ENCODE measurements at regions of chr18 and their contacts with region 1.

Region 1: DNA sequence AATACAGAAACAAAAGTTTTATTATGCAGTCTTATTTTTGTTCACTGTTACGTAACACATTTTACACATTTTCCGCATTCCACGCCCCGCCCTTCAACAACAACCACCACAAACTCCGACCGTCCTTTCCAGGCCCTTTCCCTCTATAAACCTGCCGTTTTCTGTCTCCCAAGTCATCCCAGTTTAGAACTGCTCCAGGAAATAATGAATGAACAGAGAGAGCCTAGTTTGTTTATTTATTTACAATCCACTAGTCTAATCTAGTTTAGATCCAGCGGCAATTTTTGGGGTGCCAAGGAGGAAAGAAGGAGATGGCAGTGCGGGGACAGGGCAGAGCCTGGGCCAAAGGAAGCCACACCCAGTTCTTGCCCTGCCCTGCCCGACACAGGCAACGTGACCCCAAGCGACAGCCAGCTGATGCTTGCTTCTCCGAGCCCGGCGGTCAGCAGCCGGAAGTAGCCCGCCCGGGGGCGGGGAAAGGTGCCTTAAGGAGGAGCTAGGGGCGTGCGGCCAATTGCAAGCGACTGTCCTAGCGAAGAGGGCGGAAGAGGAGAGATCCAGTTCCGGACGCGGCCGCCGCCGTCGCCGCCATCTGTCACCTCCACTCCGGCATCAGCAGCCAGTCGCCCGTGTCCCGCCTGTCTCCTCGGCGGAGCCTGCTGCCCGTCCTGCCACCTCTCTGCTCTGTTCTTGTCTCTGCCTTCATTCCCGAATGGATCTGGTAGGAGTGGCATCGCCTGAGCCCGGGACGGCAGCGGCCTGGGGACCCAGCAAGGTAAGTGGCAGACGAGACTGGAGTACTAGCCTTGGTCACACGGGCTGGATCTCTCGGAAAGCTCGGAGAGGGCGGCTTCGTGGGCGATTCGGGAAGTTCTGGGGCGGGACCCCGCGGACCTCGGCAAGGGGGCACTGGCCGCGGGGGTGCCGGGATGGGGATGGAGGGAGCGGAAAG is at the start of gene RIOK3:
- DNase-seq: peak; percentile 96
- ATAC-seq: peak; percentile 98
- H3K4me3 Mint-ChIP-seq: peak within 1 kb of the TSS; percentile 99
- H3K27ac Mint-ChIP-seq: peak within 1 kb of the TSS; percentile 81
- H3K4me1 Mint-ChIP-seq: peaks cover 42% of the 10 kb centered on the region
- H3K27me3 Mint-ChIP-seq: no peaks in the 10 kb centered on the region
- total RNA-seq, gene RIOK3: 71.1 to 71.2 TPM

Region 2: GRCh38 chr18:21612125-21612991 is 1840.6 kb before region 1 on chr18 and contains the start of gene SNRPD1:
- CTCF ChIA-PET with region 1: no interaction called
- POLR2A ChIA-PET with region 1: no interaction called
- intact Hi-C with region 1: loop called in 1 of 2 experiments (anchors 10 kb)
- DNase-seq: peak; percentile 93
- ATAC-seq: peak; percentile 98
- H3K4me3 Mint-ChIP-seq: peak within 1 kb of the TSS; percentile 92
- H3K27ac Mint-ChIP-seq: peak within 1 kb of the TSS; percentile 99
- H3K4me1 Mint-ChIP-seq: peaks cover 34% of the 10 kb centered on the region
- H3K27me3 Mint-ChIP-seq: no peaks in the 10 kb centered on the region
- total RNA-seq, gene SNRPD1: 79.9 to 163 TPM

Region 3: GRCh38 chr18:23437357-23438045 is 15.5 kb before region 1 on chr18:
- CTCF ChIA-PET with region 1: no interaction called
- POLR2A ChIA-PET with region 1: no interaction called
- intact Hi-C with region 1: loop called (anchors 1 to 2 kb)
- DNase-seq: peak; percentile 91
- ATAC-seq: peak; percentile 100
- H3K4me3 Mint-ChIP-seq: peak overlapping the region; percentile 93
- H3K27ac Mint-ChIP-seq: peak overlapping the region; percentile 89
- H3K4me1 Mint-ChIP-seq: peaks cover 17% of the 10 kb centered on the region
- H3K27me3 Mint-ChIP-seq: no peaks in the 10 kb centered on the region

Region 4: GRCh38 chr18:23487738-23488570 is 35.0 kb after region 1 on chr18:
- CTCF ChIA-PET with region 1: no interaction called
- POLR2A ChIA-PET with region 1: interaction called, 3 read pairs
- intact Hi-C with region 1: loop called in 1 of 2 experiments (anchors 2 kb)
- DNase-seq: peak; percentile 76
- ATAC-seq: peak; percentile 86
- H3K4me3 Mint-ChIP-seq: peak overlapping the region; percentile 59
- H3K27ac Mint-ChIP-seq: peak overlapping the region; percentile 90
- H3K4me1 Mint-ChIP-seq: peaks cover 19% of the 10 kb centered on the region
- H3K27me3 Mint-ChIP-seq: no peaks in the 10 kb centered on the region

Region 5: GRCh38 chr18:23586249-23587196 is 133.5 kb after region 1 on chr18 and contains the start of gene NPC1:
- CTCF ChIA-PET with region 1: no interaction called
- POLR2A ChIA-PET with region 1: interaction called, 3 read pairs
- intact Hi-C with region 1: loop called (anchors 1 kb)
- DNase-seq: peak; percentile 95
- ATAC-seq: peak; percentile 95
- H3K4me3 Mint-ChIP-seq: peak within 1 kb of the TSS; percentile 94
- H3K27ac Mint-ChIP-seq: peak within 1 kb of the TSS; percentile 91
- H3K4me1 Mint-ChIP-seq: peaks cover 39% of the 10 kb centered on the region
- H3K27me3 Mint-ChIP-seq: no peaks in the 10 kb centered on the region
- total RNA-seq, gene NPC1: 21.6 to 29.2 TPM

Region 6: DNA sequence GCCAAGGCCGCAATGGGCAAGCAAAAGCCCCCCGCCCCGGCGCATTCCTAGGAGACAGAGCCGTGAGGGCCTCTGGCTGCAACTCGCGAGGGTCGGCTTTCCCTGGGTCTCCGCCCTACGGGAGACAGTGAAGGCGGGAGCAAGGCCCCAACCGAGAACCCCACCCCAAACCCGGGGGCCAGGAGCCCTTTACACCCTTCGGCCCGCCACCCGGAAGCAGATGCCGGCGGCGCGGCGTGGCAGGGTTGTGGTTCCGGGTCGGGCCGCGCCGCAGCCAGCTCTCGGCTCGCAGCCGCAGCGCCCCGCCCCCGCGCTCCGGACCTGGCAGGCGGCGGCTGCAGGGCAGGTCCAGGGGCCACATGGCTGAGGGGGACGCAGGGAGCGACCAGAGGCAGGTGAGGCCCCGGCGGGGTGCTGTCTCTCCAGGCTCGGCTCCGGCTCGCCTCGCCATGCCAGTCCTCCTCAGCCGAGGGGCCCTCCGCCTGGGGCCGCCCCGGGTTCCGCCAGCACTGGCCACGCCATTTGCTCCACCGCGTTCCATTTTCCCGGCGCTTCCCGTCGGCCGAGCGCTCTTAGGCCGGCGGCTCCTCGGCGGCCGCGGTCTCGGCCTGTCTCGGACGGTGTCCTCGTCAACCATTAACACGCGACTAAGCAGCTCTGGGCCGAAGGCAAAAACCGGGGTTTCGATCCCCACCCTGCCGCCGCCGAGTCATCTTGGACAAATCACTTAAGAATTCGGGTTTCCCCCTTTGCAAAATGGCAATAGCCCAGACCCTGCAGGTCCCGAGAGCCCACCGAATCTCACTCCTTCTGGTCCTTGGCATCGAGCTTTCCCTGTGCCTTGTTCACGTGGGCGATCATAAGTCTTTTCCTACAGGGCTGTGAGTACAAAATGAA is 973.6 kb after region 1 on chr18 and contains the start of gene IMPACT:
- CTCF ChIA-PET with region 1: no interaction called
- POLR2A ChIA-PET with region 1: no interaction called
- intact Hi-C with region 1: loop called in 1 of 2 experiments (anchors 10 kb)
- DNase-seq: peak; percentile 86
- ATAC-seq: peak; percentile 94
- H3K4me3 Mint-ChIP-seq: peak within 1 kb of the TSS; percentile 85
- H3K27ac Mint-ChIP-seq: peak within 1 kb of the TSS; percentile 90
- H3K4me1 Mint-ChIP-seq: peaks cover 29% of the 10 kb centered on the region
- H3K27me3 Mint-ChIP-seq: peaks cover 19% of the 10 kb centered on the region
- total RNA-seq, gene IMPACT: 15.4 to 18.3 TPM

Measured in activated CD4-positive, alpha-beta T cell treated with anti-CD3 and anti-CD28 coated beads for 36 hours (primary cell).